OCI-LY7 (cell line): ENCODE measurements at regions of chr20 and their contacts with region 1.

Region 1: DNA sequence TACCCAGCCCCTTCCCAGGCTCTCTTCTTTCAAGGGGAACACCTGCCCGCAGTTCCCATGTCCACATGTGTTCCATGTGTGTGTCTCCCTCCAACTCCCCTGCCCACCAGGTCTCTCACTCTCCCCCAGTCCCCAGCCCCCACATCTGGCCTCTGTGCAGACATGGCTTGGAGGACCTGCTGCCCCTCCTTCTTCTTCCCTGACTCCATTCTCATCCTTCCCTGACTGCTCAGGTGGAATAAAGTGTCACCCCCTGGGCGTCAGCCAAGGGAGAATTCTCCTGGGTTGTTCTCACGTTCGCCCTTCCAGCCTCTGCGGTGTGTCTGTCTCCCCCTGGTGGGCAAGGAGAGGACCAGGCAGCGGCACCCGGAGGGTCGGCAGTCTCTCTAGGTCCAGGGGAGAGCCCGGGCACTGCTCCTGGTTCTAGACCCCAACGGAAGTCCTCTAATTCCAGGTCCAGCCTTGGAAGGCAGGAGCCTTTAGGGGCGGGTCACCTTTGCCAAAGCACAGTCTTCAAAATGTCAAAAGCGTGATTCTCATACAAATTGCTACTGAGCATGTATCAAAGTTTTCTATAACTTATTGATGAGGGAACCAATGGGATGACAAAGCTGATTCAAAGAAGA is 50.5 kb downstream of the EBF4 start:
- DNase-seq: peak; percentile 70
- H3K4me3 ChIP-seq: no peak overlapping the region
- H3K27ac ChIP-seq: no peak overlapping the region
- H3K4me1 ChIP-seq: no peaks in the 10 kb centered on the region
- CTCF ChIP-seq: peak; percentile 89

Region 2: DNA sequence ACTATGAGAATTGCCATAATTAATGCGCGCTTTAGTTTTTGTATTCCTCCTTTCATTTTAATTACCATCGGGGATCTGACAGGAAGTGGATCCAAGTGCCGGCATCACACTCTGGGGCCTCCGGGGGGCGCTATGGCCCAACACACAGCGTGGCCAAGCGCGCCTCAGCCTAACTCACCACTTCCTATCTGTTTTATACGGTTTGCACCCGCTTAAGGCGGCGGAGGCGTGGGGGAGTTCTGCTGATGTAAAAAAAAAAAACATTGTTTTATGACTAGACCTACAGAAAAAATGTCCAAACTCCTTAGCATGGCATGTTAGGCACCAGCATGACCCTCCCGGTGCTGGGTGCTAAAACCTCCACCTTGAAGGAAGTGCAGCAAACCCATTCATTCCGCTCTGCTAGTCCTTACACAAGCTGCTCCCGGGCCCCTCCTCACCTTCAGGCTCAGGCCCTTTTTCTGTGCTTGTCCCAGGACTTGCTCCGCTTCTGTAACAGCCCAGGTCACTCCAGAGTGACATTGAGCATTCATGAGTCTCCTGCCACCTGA is 54.9 kb before region 1 on chr20:
- CTCF ChIA-PET with region 1: no interaction called
- POLR2A ChIA-PET with region 1: no interaction called
- intact Hi-C with region 1: loop called (anchors 1 kb)
- DNase-seq: peak; percentile 49
- H3K4me3 ChIP-seq: no peak overlapping the region
- H3K27ac ChIP-seq: no peak overlapping the region
- H3K4me1 ChIP-seq: no peaks in the 10 kb centered on the region
- CTCF ChIP-seq: peak; percentile 84

Region 3: DNA sequence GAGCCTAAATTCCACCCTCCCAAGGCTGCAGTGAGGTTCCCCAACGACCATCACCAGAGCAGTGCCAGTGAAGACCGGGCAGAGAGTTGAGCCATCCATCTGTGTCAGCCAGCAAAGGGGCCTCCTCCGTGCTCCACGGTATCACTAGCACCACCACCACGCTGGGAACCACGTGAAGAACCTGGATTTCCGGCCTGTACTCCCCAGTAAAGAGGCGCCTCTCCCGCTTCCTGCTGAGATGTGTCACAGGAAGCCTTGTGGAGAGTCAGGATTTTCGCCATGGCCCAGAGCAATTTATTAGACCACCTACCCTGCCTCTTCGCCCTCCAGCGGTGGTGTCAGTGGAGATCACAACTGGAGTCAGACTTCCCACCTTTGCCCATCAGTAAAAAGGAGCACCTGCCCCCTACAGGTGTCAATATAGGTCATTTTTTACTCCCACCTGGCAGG is 28.6 kb after region 1 on chr20:
- CTCF ChIA-PET with region 1: no interaction called
- POLR2A ChIA-PET with region 1: no interaction called
- intact Hi-C with region 1: no loop called
- DNase-seq: no peak
- H3K4me3 ChIP-seq: no peak overlapping the region
- H3K27ac ChIP-seq: no peak overlapping the region
- H3K4me1 ChIP-seq: no peaks in the 10 kb centered on the region
- CTCF ChIP-seq: peak; percentile 32; the same call in 1 of the 2 replicates

Region 4: GRCh38 chr20:2995796-2996195 is 252.7 kb after region 1 on chr20:
- CTCF ChIA-PET with region 1: no interaction called
- POLR2A ChIA-PET with region 1: no interaction called
- intact Hi-C with region 1: no loop called
- DNase-seq: no peak
- H3K4me3 ChIP-seq: no peak overlapping the region
- H3K27ac ChIP-seq: no peak overlapping the region
- H3K4me1 ChIP-seq: no peaks in the 10 kb centered on the region
- CTCF ChIP-seq: no peak